Right ventricle myocardium superior (tissue), 1 donor: ENCODE measurements at regions of chr2 and their contacts with region 1.

Region 1: DNA sequence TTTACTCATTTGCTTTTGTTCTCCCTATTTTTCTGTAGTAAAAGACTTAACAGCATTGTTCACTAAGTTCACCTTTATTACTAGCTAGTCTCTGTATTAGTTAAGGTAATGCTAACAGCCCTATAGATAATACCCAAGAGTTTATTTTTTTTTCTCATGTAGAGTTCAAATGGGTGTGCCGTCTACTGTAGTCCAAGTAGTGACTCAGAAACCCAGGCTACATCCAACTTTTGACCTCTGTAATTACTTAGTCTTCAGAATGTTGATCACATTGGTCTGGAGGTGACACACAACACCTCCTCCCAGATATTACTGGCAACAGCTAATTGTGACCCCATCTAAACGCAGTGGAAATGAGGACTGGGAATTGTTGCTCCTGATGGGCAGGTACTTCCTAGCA is 7.7 kb downstream of the COQ10B start:
- DNase-seq: no peak
- ATAC-seq: no peak

Region 2: GRCh38 chr2:197310271-197310985 is 150.6 kb before region 1 on chr2 and contains the start of gene ANKRD44:
- intact Hi-C with region 1: no loop called
- DNase-seq: peak; percentile 96
- ATAC-seq: peak; percentile 98
- total RNA-seq, gene ANKRD44: 7.4 TPM

Region 3: GRCh38 chr2:197423307-197423706 is 37.8 kb before region 1 on chr2:
- intact Hi-C with region 1: loop called (anchors 5 kb)
- DNase-seq: no peak
- ATAC-seq: no peak